ENCODE measurements at regions of chr5 and their contacts with region 1.

Region 1: DNA sequence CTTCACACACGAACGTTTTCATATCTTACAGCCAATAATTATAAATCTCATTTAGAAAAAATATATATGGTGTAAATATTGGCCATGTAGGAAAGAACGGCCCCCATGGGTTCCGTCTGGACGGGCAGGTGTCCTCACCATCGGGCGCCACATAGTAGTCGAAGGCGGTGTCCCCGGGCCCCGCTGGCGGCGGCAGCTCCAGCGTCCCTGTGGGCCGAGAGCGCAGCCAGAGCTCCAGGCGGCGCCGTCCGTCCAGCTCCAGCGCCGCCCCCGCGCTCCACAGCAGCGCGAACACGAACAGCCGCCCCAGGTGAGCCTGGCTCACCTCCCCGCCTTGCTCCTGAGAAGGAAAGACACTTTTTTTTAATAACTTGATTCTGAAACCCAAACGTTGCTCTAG is 134.6 kb downstream of the DNAH5 start:
- DNase-seq: no peak
- ATAC-seq: no peak
- H3K4me3 Mint-ChIP-seq: no peak overlapping the region
- H3K27ac Mint-ChIP-seq: no peak overlapping the region
- H3K4me1 Mint-ChIP-seq: no peaks in the 10 kb centered on the region
- H3K27me3 Mint-ChIP-seq: no peaks in the 10 kb centered on the region

Region 2: GRCh38 chr5:13831351-13831750 is 21.4 kb after region 1 on chr5:
- CTCF ChIA-PET with region 1: interaction called, 3 read pairs
- POLR2A ChIA-PET with region 1: interaction called, 10 read pairs
- intact Hi-C with region 1: no loop called
- DNase-seq: no peak
- ATAC-seq: no peak
- H3K4me3 Mint-ChIP-seq: no peak overlapping the region
- H3K27ac Mint-ChIP-seq: no peak overlapping the region
- H3K4me1 Mint-ChIP-seq: no peaks in the 10 kb centered on the region
- H3K27me3 Mint-ChIP-seq: no peaks in the 10 kb centered on the region